ENCODE measurements at regions of chr11 and their contacts with region 1.

Region 1: GRCh38 chr11:102007567-102008437 is 39.4 kb upstream of the CFAP300 start:
- DNase-seq: peak in 1 of 2 experiments; percentile 77
- H3K4me3 ChIP-seq: no peak overlapping the region
- H3K4me1 ChIP-seq: peaks cover 17% of the 10 kb centered on the region
- H3K27me3 ChIP-seq: no peaks in the 10 kb centered on the region

Region 2: GRCh38 chr11:101436511-101437142 is 571.2 kb before region 1 on chr11:
- in situ Hi-C with region 1: loop called (anchors 25 kb)
- DNase-seq: peak; percentile 40 to 76
- H3K4me3 ChIP-seq: no peak overlapping the region
- H3K4me1 ChIP-seq: no peaks in the 10 kb centered on the region
- H3K27me3 ChIP-seq: no peaks in the 10 kb centered on the region

Region 3: DNA sequence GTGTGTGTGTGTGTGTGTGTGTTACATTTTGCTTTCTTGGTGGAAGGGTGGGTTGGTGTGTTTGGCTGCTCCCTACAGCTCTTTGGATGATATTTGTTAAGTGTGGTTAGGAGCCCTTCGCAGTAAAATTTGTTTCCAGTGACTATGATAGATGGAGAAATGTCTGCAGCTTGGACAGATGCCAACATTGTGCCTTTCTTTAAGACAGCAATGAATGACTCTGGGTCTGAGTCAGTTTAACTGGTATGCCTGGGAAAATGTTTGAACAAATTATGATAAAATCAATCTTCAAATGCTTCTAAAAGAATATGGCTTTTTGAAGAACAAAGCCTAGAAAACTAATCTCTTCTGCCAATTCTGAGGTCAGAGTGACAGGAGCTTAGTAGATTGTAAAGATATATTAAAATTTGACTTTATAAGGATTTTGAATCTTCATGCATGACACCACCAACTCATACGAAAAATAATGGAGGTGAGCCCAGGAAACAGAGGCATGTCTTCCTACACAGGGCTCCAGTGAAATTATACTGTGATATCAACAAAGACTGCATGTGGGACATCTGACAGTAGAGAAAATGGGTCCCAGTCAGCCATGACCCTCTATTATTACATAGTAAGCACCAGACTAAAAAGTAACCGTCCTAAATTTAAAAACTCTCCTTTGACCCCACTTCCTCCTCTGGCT is 321.1 kb before region 1 on chr11:
- in situ Hi-C with region 1: no loop called
- DNase-seq: peak in 1 of 2 experiments; percentile 12
- H3K4me3 ChIP-seq: no peak overlapping the region
- H3K4me1 ChIP-seq: no peaks in the 10 kb centered on the region; the same call in 1 of the 2 replicates
- H3K27me3 ChIP-seq: no peaks in the 10 kb centered on the region

Region 4: DNA sequence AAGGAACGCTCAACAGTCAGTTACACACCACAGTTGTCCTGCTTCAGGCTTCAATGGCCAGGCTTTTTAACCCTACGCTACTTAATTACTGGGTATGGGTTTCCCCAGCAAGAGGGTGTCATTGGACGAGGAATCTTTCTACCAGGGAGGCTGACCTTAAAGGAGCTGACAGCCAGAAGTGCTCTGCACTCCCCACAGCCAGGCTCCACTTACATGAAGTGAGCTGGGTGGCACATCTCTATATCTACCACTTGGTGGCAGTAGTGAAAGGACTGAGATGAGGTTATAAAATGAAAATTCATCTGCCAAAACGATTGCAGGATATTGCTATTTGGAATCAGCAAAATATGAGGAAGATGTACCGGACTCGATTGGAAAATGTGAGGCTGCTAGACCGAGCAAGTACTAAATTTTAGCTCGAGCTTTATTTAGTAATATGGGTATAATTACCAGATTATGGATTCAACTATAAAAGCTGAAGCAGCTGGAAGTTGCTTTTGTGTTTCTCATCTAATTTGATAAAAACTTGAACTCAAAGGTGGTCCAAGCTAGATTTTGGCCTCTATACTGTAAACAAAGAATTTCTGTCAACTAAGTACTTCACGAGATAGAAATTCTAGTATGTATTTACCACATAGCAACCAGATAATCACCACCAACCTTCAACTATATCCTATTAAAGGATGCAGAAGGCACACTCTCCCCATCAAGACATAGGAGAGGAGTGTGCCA is 146.9 kb before region 1 on chr11:
- in situ Hi-C with region 1: loop called (anchors 10 kb)
- DNase-seq: peak; percentile 57 to 59
- H3K4me3 ChIP-seq: no peak overlapping the region
- H3K4me1 ChIP-seq: no peaks in the 10 kb centered on the region
- H3K27me3 ChIP-seq: no peaks in the 10 kb centered on the region

Region 5: DNA sequence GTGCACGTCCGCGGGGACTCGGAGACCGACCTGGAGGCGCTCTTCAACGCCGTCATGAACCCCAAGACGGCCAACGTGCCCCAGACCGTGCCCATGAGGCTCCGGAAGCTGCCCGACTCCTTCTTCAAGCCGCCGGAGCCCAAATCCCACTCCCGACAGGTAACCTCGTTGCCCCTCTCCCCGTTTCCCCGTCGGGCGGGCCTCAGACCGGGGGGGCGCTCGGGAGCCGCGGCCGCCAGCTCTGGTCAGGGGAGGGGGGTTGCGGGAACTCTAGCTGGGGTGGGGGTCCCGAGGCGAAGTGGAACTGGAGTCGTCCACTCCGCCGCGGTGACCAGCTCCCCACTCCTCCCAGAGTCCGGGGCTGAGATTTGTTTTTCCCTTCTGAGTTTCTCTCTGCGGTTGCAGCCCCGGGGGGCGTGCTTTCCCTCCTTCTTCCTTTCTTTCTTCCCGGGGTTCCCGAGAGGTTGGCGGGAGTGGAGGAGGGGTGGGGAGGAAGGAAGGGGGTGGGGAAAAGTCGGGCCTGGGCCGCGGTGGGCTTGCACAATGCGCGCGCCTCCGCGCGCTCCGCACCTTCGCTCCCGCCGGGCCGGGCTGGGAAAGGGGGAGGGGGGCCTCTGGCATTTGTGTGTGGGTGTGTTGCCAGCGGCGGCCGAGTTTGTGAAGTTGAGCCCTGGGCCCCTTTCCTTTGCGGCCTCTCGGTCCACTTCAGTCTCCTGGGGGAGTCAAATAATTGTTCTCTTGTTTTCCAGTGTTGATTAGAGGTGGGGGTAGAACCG is 103.4 kb after region 1 on chr11:
- in situ Hi-C with region 1: no loop called
- DNase-seq: peak; percentile 85 to 95
- H3K4me3 ChIP-seq: peak overlapping the region; percentile 80
- H3K4me1 ChIP-seq: peaks cover 35% of the 10 kb centered on the region
- H3K27me3 ChIP-seq: no peaks in the 10 kb centered on the region